Heart left ventricle (tissue), 16 donors: ENCODE measurements at regions of chr5 and their contacts with region 1.

Region 1: DNA sequence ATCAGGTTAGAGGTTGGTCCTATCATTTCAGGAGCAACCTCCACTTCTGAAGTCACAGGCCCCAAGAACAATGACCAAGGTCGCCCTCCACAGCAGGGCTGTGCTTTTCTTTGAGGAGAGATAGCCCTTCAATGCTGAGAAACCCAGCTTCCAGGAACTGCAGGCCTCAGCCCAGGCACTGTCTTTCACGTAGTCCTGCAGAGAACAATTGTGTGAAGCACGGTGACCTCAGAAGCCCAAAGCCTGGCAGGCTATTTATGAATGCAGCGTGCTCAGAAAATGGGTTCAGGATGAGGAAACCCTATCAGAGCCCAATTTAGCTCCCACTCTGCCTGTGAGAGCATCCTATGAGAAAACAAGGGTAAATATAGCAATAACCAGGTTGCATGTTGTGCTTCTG is 388.3 kb downstream of the PLK2 start:
- DNase-seq: peak; percentile 54 to 86 (median 79)
- ATAC-seq: peak; percentile 94 to 98 (median 97)
- H3K4me3 ChIP-seq: no peak overlapping the region
- H3K27ac ChIP-seq: peak overlapping the region; percentile 3 to 85 (median 78)
- H3K4me1 ChIP-seq: peaks cover 6 to 60% (median 46%) of the 10 kb centered on the region in 12 donors
- H3K27me3 ChIP-seq: no peaks in the 10 kb centered on the region
- CTCF ChIP-seq: no peak
- POLR2A ChIP-seq: no peak

Region 2: DNA sequence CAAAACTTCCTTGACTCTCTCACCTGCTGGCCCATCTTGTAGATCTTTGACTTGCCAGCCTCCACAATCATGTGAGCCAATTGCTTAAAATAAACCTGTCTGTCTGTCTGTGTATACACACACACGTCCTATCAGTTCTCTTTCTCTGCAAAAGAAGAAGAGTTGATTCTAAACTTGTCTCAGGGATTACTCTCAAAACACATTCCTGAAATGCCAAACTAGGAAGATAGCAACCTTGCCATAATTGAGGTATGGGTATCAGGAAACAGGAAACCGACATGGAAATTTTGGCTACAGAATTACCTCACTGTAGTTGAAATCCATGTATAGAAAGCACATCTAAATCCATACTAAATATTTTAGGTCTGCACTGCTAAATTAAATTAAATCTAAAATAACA is 95.1 kb before region 1 on chr5:
- intact Hi-C with region 1: no loop called
- DNase-seq: no peak
- ATAC-seq: no peak
- H3K4me3 ChIP-seq: no peak overlapping the region
- H3K27ac ChIP-seq: no peak overlapping the region
- H3K4me1 ChIP-seq: peaks cover 0 to 5% (median 0%) of the 10 kb centered on the region in 12 donors
- H3K27me3 ChIP-seq: no peaks in the 10 kb centered on the region
- CTCF ChIP-seq: no peak
- POLR2A ChIP-seq: no peak

Region 3: DNA sequence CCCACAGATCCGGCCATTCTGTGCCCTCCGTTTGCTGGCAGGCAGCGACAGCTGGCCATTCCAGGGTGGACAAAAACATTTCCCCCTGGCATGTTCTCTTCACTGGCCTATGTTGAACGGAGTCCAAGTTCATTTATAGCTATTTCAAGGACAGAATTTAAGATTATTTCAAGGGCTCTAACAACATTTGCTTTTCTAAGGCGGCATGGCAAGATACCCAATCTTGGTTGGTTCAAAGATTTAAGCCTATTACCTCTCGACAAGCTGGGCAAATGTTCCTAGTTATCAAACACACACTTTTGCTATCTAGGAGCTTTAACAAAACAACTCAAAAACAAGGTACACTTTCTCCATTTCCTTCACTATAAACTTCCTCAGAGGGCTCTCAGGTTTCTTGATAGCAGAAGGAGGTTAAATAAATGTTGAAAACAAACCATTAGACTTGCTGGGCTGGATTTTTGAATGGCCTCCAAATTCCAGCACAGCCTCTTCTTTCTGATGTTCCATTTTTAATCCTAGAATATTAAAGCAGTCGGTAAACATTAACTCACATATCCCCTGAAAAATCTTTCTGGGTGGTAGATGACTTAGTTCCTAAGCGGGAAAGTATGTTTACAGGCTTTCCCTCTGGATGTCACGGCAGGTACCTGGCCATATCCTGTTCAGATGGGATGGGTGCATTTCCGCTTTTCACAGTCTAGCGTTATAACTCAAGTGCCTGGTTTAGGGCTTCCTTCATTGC is 56.1 kb after region 1 on chr5:
- intact Hi-C with region 1: loop called in 1 of 10 experiments (anchors 5 kb)
- DNase-seq: no peak
- ATAC-seq: peak; percentile 28 to 70 (median 65)
- H3K4me3 ChIP-seq: peak overlapping the region in 2 of 12 donors; percentile 5 to 18
- H3K27ac ChIP-seq: peak overlapping the region; percentile 4 to 81 (median 45)
- H3K4me1 ChIP-seq: peaks cover 0 to 32% (median 9%) of the 10 kb centered on the region in 12 donors
- H3K27me3 ChIP-seq: no peaks in the 10 kb centered on the region
- CTCF ChIP-seq: no peak
- POLR2A ChIP-seq: no peak

Region 4: GRCh38 chr5:58240286-58240685 is 168.7 kb after region 1 on chr5:
- intact Hi-C with region 1: loop called in 6 of 10 experiments (anchors 5 to 10 kb)
- DNase-seq: no peak
- ATAC-seq: no peak
- H3K4me3 ChIP-seq: no peak overlapping the region
- H3K27ac ChIP-seq: peak overlapping the region in 8 of 12 donors; percentile 14 to 84 (median 63)
- H3K4me1 ChIP-seq: peaks cover 0 to 40% (median 7%) of the 10 kb centered on the region in 12 donors
- H3K27me3 ChIP-seq: no peaks in the 10 kb centered on the region
- CTCF ChIP-seq: no peak
- POLR2A ChIP-seq: no peak

Region 5: DNA sequence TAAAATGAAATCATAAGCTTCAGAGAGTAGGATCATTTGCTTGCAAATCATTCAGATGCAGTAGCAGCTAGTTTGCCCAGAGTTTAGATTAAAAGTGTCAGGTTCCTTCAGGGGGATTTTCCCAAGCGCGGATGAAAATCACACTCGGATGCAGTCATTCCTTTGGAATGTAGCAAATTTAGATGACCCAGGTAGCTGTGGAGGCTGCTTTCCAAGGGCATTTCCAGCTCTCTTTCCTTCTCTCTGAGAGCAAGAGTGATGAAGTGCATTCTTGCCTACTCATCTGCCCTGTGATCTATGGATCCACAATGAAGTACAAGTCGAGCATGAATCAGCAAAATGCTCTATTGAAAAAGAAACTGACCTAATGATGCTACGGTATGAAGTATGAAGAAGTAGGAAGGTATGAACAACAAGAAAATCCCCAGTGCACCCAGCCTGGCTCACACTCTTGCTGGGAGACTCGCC is 188.2 kb after region 1 on chr5:
- intact Hi-C with region 1: loop called in 2 of 10 experiments (anchors 10 kb)
- DNase-seq: no peak
- ATAC-seq: peak in 1 of 4 donors; percentile 40
- H3K4me3 ChIP-seq: peak overlapping the region in 2 of 12 donors; percentile 7
- H3K27ac ChIP-seq: peak overlapping the region in 3 of 12 donors; percentile 1 to 22 (median 8)
- H3K4me1 ChIP-seq: peaks cover 0 to 31% (median 15%) of the 10 kb centered on the region in 12 donors
- H3K27me3 ChIP-seq: no peaks in the 10 kb centered on the region
- CTCF ChIP-seq: no peak
- POLR2A ChIP-seq: no peak

Region 6: DNA sequence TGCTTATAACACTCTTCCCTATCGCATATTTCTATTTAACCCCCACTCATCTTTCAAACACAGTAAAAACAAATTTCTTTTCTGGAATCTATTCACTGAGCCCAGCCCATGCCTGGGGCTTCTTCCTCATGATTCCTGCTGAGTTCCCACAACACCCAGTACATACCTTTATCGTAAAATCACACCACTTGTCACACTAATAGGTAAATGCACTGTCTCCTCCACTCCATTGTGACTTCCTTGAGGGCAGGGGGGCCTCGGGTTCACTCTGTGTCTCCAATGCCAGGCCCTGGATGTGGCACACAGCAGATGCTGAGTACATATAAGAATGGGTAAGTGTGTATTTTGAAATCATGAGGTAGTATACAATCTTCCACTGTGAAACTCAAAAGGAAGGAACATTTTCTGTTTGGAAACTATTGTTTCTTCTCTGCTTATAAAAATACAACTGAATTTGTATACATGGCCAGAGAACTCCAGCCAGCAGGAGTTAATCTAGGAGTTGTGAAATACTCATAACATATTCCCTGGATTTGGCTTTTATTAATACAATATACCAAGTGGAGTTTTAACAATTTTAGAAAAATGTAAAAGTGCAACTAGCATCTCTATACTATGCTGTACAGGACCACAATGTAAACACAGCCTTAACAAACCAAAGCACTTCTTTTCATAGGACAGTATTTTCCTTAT is 381.1 kb after region 1 on chr5:
- intact Hi-C with region 1: loop called in 8 of 10 experiments (anchors 2 to 10 kb)
- DNase-seq: no peak
- ATAC-seq: no peak
- H3K4me3 ChIP-seq: peak overlapping the region in 1 of 12 donors; percentile 97
- H3K27ac ChIP-seq: peak overlapping the region in 1 of 12 donors; percentile 17
- H3K4me1 ChIP-seq: peaks cover 0 to 41% (median 17%) of the 10 kb centered on the region in 12 donors
- H3K27me3 ChIP-seq: no peaks in the 10 kb centered on the region
- CTCF ChIP-seq: no peak
- POLR2A ChIP-seq: no peak

Region 7: DNA sequence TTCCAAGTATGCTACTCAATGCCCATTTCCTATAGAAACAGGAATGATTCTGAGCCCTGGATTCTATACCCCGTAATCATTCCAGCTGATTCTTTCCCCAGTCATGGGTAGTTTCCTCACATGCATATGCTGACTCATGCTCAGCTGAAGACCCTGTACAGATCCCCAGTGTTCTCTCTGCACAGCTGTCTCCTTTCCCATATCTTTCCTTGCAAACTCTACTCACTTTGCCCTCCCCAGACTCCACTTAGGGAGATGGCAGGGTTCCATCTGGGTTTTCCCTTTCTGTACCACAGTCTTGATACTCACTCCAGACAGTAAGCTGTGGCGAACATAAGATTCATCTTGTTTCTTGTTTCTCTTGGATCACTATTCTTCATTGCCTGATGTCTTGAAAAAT is 868.9 kb after region 1 on chr5:
- intact Hi-C with region 1: no loop called
- DNase-seq: no peak
- ATAC-seq: peak in 3 of 4 donors; percentile 57 to 63 (median 57)
- H3K4me3 ChIP-seq: no peak overlapping the region
- H3K27ac ChIP-seq: no peak overlapping the region
- H3K4me1 ChIP-seq: peaks cover 0 to 6% (median under 1%) of the 10 kb centered on the region in 12 donors
- H3K27me3 ChIP-seq: no peaks in the 10 kb centered on the region
- CTCF ChIP-seq: no peak
- POLR2A ChIP-seq: no peak